Body of pancreas (tissue), 4 donors: ENCODE measurements at regions of chr1 and their contacts with region 1.

Region 1: GRCh38 chr1:165914136-165914798 is 86.9 kb downstream of the UCK2 start:
- DNase-seq: peak; percentile 75 to 85 (median 80)
- ATAC-seq: peak; percentile 91
- H3K4me3 ChIP-seq: no peak overlapping the region
- H3K27ac ChIP-seq: no peak overlapping the region
- H3K4me1 ChIP-seq: peaks cover 19% of the 10 kb centered on the region
- H3K27me3 ChIP-seq: no peaks in the 10 kb centered on the region
- CTCF ChIP-seq: peak; percentile 66 to 98 (median 96)
- POLR2A ChIP-seq: no peak

Region 2: GRCh38 chr1:165403835-165404482 is 510.3 kb before region 1 on chr1:
- intact Hi-C with region 1: loop called (anchors 10 kb)
- DNase-seq: peak; percentile 25 to 39 (median 32)
- ATAC-seq: no peak
- H3K4me3 ChIP-seq: no peak overlapping the region
- H3K27ac ChIP-seq: no peak overlapping the region
- H3K4me1 ChIP-seq: no peaks in the 10 kb centered on the region
- H3K27me3 ChIP-seq: no peaks in the 10 kb centered on the region
- CTCF ChIP-seq: peak in 6 of 7 experiments; percentile 22 to 62 (median 53)
- POLR2A ChIP-seq: no peak

Region 3: GRCh38 chr1:165600793-165601192 is 313.5 kb before region 1 on chr1:
- intact Hi-C with region 1: loop called (anchors 10 kb)
- DNase-seq: peak in 1 of 4 donors; percentile 7
- ATAC-seq: no peak
- H3K4me3 ChIP-seq: no peak overlapping the region
- H3K27ac ChIP-seq: no peak overlapping the region
- H3K4me1 ChIP-seq: peaks cover 21% of the 10 kb centered on the region
- H3K27me3 ChIP-seq: no peaks in the 10 kb centered on the region
- CTCF ChIP-seq: no peak
- POLR2A ChIP-seq: no peak

Region 4: GRCh38 chr1:165717918-165718515 is 196.2 kb before region 1 on chr1:
- intact Hi-C with region 1: loop called (anchors 5 kb)
- DNase-seq: peak; percentile 44 to 73 (median 56)
- ATAC-seq: no peak
- H3K4me3 ChIP-seq: no peak overlapping the region
- H3K27ac ChIP-seq: no peak overlapping the region
- H3K4me1 ChIP-seq: no peaks in the 10 kb centered on the region
- H3K27me3 ChIP-seq: no peaks in the 10 kb centered on the region
- CTCF ChIP-seq: peak; percentile 30 to 85 (median 71)
- POLR2A ChIP-seq: no peak